OCI-LY7 (cell line): ENCODE measurements at regions of chr4 and their contacts with region 1.

Region 1: DNA sequence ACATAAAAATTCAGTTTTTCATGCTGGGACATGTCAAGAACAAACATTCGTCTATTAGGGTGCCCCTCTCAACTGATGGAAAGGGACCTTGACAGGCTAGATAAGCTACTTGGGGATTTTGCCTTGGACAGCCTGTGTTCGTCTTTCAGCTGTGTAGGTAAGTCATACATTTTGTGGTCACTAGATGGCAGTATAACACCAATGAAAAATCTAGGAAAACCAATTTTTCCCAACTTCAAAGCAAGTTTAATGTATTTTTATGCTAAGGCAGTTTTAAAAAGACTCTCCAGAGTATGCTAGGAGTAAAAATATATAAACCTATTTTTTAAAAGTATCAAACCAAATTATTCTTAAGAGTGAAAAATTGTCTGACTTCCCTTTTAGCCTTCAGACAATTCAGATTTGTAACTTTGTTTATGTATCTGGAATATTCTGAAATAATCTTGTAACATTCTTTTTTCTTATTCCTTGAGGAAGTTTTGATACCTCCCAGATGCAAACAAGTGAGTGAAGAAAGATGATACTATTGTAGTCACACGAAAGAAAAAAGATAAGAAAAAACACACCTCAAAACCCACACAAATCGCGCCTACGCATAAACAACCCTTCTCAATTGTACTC is 158.3 kb downstream of the CPE start:
- DNase-seq: peak; percentile 52
- H3K4me3 ChIP-seq: no peak overlapping the region
- H3K27ac ChIP-seq: no peak overlapping the region
- H3K4me1 ChIP-seq: no peaks in the 10 kb centered on the region
- CTCF ChIP-seq: peak; percentile 91

Region 2: GRCh38 chr4:165359501-165359900 is 177.6 kb before region 1 on chr4:
- CTCF ChIA-PET with region 1: no interaction called
- POLR2A ChIA-PET with region 1: no interaction called
- intact Hi-C with region 1: no loop called
- DNase-seq: no peak
- H3K4me3 ChIP-seq: no peak overlapping the region
- H3K27ac ChIP-seq: no peak overlapping the region
- H3K4me1 ChIP-seq: no peaks in the 10 kb centered on the region
- CTCF ChIP-seq: no peak

Region 3: DNA sequence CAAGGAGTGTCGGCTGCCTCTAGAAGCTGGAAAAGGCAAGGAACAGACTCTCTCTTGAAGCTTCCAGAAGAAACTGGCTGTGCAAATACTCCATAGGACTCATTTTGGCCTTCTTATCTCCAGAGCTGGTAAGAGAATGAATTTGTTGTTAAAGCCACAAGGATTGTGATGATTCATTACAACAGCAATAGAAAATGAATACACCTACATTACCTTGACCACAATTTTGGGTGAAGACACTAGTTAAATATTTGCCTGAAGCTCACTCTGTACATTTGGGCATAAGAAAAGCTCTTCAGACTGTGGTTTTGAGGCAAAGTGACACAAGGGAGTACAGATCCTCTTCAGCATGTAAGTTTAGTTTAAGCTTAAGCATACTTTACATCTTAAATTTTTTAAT is 201.4 kb after region 1 on chr4:
- CTCF ChIA-PET with region 1: no interaction called
- POLR2A ChIA-PET with region 1: no interaction called
- intact Hi-C with region 1: no loop called
- DNase-seq: no peak
- H3K4me3 ChIP-seq: no peak overlapping the region
- H3K27ac ChIP-seq: no peak overlapping the region
- H3K4me1 ChIP-seq: no peaks in the 10 kb centered on the region
- CTCF ChIP-seq: no peak

Region 4: GRCh38 chr4:165864271-165864670 is 327.1 kb after region 1 on chr4:
- CTCF ChIA-PET with region 1: no interaction called
- POLR2A ChIA-PET with region 1: no interaction called
- intact Hi-C with region 1: loop called (anchors 10 kb)
- DNase-seq: peak; percentile 43
- H3K4me3 ChIP-seq: no peak overlapping the region
- H3K27ac ChIP-seq: no peak overlapping the region
- H3K4me1 ChIP-seq: no peaks in the 10 kb centered on the region
- CTCF ChIP-seq: peak; percentile 68

Region 5: GRCh38 chr4:166252487-166253402 is 715.6 kb after region 1 on chr4:
- CTCF ChIA-PET with region 1: interaction called, 3 read pairs
- POLR2A ChIA-PET with region 1: no interaction called
- intact Hi-C with region 1: loop called (anchors 2 kb)
- DNase-seq: peak; percentile 28
- H3K4me3 ChIP-seq: no peak overlapping the region
- H3K27ac ChIP-seq: no peak overlapping the region
- H3K4me1 ChIP-seq: no peaks in the 10 kb centered on the region
- CTCF ChIP-seq: peak; percentile 77